Activated CD4-positive, alpha-beta T cell treated with anti-CD3 and anti-CD28 coated beads for 36 hours (primary cell): ENCODE measurements at regions of chr3 and their contacts with region 1.

Region 1: GRCh38 chr3:50298836-50299637 is at the starts of genes HYAL3 and NAA80:
- DNase-seq: peak; percentile 100
- ATAC-seq: peak; percentile 89
- H3K4me3 Mint-ChIP-seq: peak within 1 kb of the TSS; percentile 97
- H3K27ac Mint-ChIP-seq: peak within 1 kb of the TSS; percentile 96
- H3K4me1 Mint-ChIP-seq: peaks cover 13% of the 10 kb centered on the region
- H3K27me3 Mint-ChIP-seq: no peaks in the 10 kb centered on the region
- total RNA-seq, gene HYAL3: 4.5 to 5.4 TPM
- total RNA-seq, gene NAA80: 17.6 to 18.7 TPM

Region 2: DNA sequence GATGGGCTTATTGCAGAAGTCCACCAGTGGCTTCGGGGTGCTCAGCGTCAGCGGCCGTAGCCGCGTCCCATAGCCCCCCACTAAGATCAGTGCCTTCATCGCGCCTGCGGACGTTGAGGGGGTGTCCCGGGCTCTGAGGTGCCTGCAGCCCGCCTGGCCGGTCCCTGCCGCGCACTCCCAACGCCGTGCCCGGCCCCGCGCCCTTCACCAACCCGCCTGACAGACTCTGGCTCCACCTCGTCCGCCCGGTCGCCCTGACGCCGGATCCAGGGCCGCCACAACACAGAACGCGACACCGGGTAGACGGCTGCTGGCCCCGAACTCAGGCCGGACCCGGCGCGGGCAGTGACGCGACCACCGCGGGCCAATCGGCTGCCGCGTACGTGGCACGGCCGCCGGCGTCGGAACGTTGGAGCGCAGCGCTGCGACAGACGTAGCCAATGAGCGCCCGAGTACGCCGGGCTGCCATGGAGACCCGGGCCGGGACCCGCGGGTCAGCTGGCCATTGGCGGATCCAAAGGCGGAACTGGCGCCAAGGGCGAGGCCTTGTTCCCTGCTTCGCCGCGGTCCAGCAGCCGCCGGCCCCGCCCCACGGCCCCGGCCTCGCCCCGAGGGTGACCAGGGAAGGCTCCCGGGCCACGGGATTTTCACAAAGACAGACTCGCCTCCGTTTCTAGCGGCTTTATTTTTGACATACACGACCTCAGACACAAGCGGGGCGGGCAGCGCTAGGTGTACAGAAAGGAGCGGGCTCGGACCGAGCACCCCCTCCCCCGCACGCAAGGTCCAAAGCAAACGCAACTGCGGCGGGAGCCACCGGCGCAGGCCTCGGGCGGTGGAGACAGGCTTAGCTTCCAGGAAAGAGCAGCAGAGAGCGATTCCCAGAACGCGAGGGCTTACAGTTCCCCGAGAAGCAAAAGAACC is 575.1 kb before region 1 on chr3 and contains the start of gene GMPPB:
- CTCF ChIA-PET with region 1: no interaction called
- POLR2A ChIA-PET with region 1: no interaction called
- intact Hi-C with region 1: loop called in 1 of 2 experiments (anchors 10 kb)
- DNase-seq: peak; percentile 97
- ATAC-seq: peak; percentile 87
- H3K4me3 Mint-ChIP-seq: peak within 1 kb of the TSS; percentile 92
- H3K27ac Mint-ChIP-seq: peak within 1 kb of the TSS; percentile 96
- H3K4me1 Mint-ChIP-seq: peaks cover 22% of the 10 kb centered on the region
- H3K27me3 Mint-ChIP-seq: no peaks in the 10 kb centered on the region
- total RNA-seq, gene GMPPB: 21.0 to 32.1 TPM

Region 3: DNA sequence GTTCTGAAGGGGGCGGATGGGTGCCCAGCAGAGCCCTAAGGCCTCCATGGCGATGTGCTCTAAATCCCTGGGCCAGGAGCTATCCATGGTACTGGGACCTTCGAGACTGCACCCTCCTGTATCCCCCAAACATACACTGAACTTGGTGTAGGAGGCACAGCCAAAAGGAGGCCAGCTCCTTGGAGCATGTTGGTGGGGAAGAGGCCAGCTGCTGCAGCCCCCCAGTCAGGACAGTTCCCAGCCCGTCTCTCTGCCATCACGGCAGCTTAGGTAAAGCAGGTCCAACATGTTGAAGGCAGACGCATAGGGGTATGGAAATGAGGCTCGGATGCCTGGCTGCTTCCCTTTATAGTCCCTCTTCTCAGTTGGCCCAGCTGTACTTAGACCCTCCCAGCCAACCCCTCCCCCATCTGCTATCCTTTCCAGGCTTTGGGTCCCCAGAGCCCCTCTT is 431.1 kb before region 1 on chr3:
- CTCF ChIA-PET with region 1: no interaction called
- POLR2A ChIA-PET with region 1: no interaction called
- intact Hi-C with region 1: no loop called
- DNase-seq: peak; percentile 49
- ATAC-seq: peak; percentile 27
- H3K4me3 Mint-ChIP-seq: no peak overlapping the region
- H3K27ac Mint-ChIP-seq: no peak overlapping the region
- H3K4me1 Mint-ChIP-seq: no peaks in the 10 kb centered on the region
- H3K27me3 Mint-ChIP-seq: peaks cover 32% of the 10 kb centered on the region

Region 4: GRCh38 chr3:50235716-50236496 is 63.1 kb before region 1 on chr3 and contains the start of gene GNAI2:
- CTCF ChIA-PET with region 1: interaction called, 5 read pairs
- POLR2A ChIA-PET with region 1: interaction called, 5 read pairs
- intact Hi-C with region 1: loop called (anchors 1 to 2 kb)
- DNase-seq: peak; percentile 99
- ATAC-seq: peak; percentile 92
- H3K4me3 Mint-ChIP-seq: peak within 1 kb of the TSS; percentile 90
- H3K27ac Mint-ChIP-seq: peak within 1 kb of the TSS; percentile 96
- H3K4me1 Mint-ChIP-seq: peaks cover 31% of the 10 kb centered on the region
- H3K27me3 Mint-ChIP-seq: no peaks in the 10 kb centered on the region
- total RNA-seq, gene GNAI2: 280 to 341 TPM

Region 5: GRCh38 chr3:50327943-50328691 is 29.1 kb after region 1 on chr3 and contains the start of gene TUSC2:
- CTCF ChIA-PET with region 1: interaction called, 16 read pairs
- POLR2A ChIA-PET with region 1: no interaction called
- intact Hi-C with region 1: no loop called
- DNase-seq: peak; percentile 98
- ATAC-seq: peak; percentile 95
- H3K4me3 Mint-ChIP-seq: peak within 1 kb of the TSS; percentile 83
- H3K27ac Mint-ChIP-seq: peak within 1 kb of the TSS; percentile 76
- H3K4me1 Mint-ChIP-seq: peaks cover 20% of the 10 kb centered on the region
- H3K27me3 Mint-ChIP-seq: no peaks in the 10 kb centered on the region
- total RNA-seq, gene TUSC2: 15.0 to 17.1 TPM

Region 6: GRCh38 chr3:50358911-50359759 is 60.1 kb after region 1 on chr3 and contains the start of gene TMEM115:
- CTCF ChIA-PET with region 1: interaction called, 3 read pairs
- POLR2A ChIA-PET with region 1: no interaction called
- intact Hi-C with region 1: loop called (anchors 1 kb)
- DNase-seq: peak; percentile 97
- ATAC-seq: peak; percentile 100
- H3K4me3 Mint-ChIP-seq: peak within 1 kb of the TSS; percentile 91
- H3K27ac Mint-ChIP-seq: peak within 1 kb of the TSS; percentile 94
- H3K4me1 Mint-ChIP-seq: peaks cover 37% of the 10 kb centered on the region
- H3K27me3 Mint-ChIP-seq: no peaks in the 10 kb centered on the region
- total RNA-seq, gene TMEM115: 13.1 to 16.1 TPM

Region 7: GRCh38 chr3:51498876-51499738 is 1200.1 kb after region 1 on chr3:
- CTCF ChIA-PET with region 1: no interaction called
- POLR2A ChIA-PET with region 1: no interaction called
- intact Hi-C with region 1: loop called in 1 of 2 experiments (anchors 1 kb)
- DNase-seq: peak; percentile 94
- ATAC-seq: peak; percentile 75
- H3K4me3 Mint-ChIP-seq: peak overlapping the region; percentile 88
- H3K27ac Mint-ChIP-seq: peak overlapping the region; percentile 97
- H3K4me1 Mint-ChIP-seq: peaks cover 16% of the 10 kb centered on the region
- H3K27me3 Mint-ChIP-seq: no peaks in the 10 kb centered on the region